GM12878 (cell line): ENCODE measurements at regions of chr19 and their contacts with region 1.

Region 1: GRCh38 chr19:18185538-18185937 is 7.5 kb upstream of the MPV17L2 start:
- DNase-seq: no peak
- ATAC-seq: no peak
- H3K4me3 ChIP-seq: no peak overlapping the region
- H3K27ac ChIP-seq: no peak overlapping the region
- H3K4me1 ChIP-seq: peaks cover 3% of the 10 kb centered on the region; the same call in 1 of the 2 replicates
- H3K27me3 ChIP-seq: no peaks in the 10 kb centered on the region
- CTCF ChIP-seq: no peak
- EP300 ChIP-seq: no peak
- POLR2A ChIP-seq: no peak
- RAD21 ChIP-seq: no peak

Region 2: GRCh38 chr19:18091217-18091608 is 94.3 kb before region 1 on chr19:
- CTCF ChIA-PET with region 1: no interaction called
- POLR2A ChIA-PET with region 1: interaction called, 10 read pairs
- RAD21 ChIA-PET with region 1: interaction called, 3 read pairs
- SMC1A ChIA-PET with region 1: no interaction called
- in situ Hi-C with region 1: no loop called
- intact Hi-C with region 1: no loop called
- DNase-seq: peak; percentile 66
- ATAC-seq: peak; percentile 70
- H3K4me3 ChIP-seq: 0 out of 2 replicates have a peak overlapping the region, but pooled peaks have one; percentile 15
- H3K27ac ChIP-seq: peak overlapping the region; percentile 93
- H3K4me1 ChIP-seq: peaks cover 34% of the 10 kb centered on the region
- H3K27me3 ChIP-seq: no peaks in the 10 kb centered on the region
- CTCF ChIP-seq: no peak
- EP300 ChIP-seq: 0 out of 4 replicates have a peak, but pooled peaks of 1 of the 2 experiments have one; percentile 29
- POLR2A ChIP-seq: peak; percentile 79
- RAD21 ChIP-seq: no peak

Region 3: GRCh38 chr19:18385675-18386542 is 200.4 kb after region 1 on chr19 and contains the start of gene GDF15:
- CTCF ChIA-PET with region 1: no interaction called
- POLR2A ChIA-PET with region 1: no interaction called
- RAD21 ChIA-PET with region 1: no interaction called
- SMC1A ChIA-PET with region 1: no interaction called
- in situ Hi-C with region 1: no loop called
- intact Hi-C with region 1: no loop called
- DNase-seq: no peak
- ATAC-seq: peak; percentile 70
- H3K4me3 ChIP-seq: 0 out of 2 replicates have a peak within 1 kb of the TSS, but pooled peaks have one; percentile 5
- H3K27ac ChIP-seq: no peak within 1 kb of the TSS
- H3K4me1 ChIP-seq: peaks cover 8% of the 10 kb centered on the region
- H3K27me3 ChIP-seq: peaks cover 0 to 3% of the 10 kb centered on the region in 2 experiments; a peak in 3 of 4 replicates
- CTCF ChIP-seq: peak; percentile 49 to 85 (median 55)
- EP300 ChIP-seq: no peak
- POLR2A ChIP-seq: peak; percentile 70
- RAD21 ChIP-seq: no peak
- polyA plus RNA-seq, gene GDF15: 0.11 TPM in 1 of 2 experiments, not detected in the other